Natural killer cell (primary cell): ENCODE measurements at regions of chr14 and their contacts with region 1.

Region 1: DNA sequence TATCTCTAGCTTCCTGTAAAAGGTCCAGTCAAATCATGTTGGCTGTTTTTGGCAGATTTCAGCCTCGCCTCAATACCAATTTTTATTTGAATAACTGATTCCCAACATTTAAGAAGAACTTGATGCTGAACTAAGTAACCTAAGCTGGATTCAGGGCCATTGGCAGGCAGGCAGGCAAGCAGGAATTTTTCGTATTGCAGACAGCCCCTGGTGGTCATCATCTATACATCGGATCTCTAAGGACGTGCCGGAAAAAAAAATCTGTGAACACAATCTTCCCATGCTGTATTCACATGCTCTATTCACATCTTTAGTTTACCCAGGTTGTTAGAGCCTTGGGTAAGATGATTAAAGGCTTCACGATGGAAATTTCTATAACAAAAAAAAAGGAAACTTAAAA is 7.0 kb downstream of the VCPKMT start:
- DNase-seq: no peak
- ATAC-seq: no peak
- H3K4me3 ChIP-seq: no peak overlapping the region
- H3K4me3 Mint-ChIP-seq: no peak overlapping the region
- H3K27ac ChIP-seq: no peak overlapping the region
- H3K27ac Mint-ChIP-seq: no peak overlapping the region
- H3K4me1 ChIP-seq: no peaks in the 10 kb centered on the region
- H3K4me1 Mint-ChIP-seq: no peaks in the 10 kb centered on the region
- H3K27me3 ChIP-seq: no peaks in the 10 kb centered on the region
- H3K27me3 Mint-ChIP-seq: no peaks in the 10 kb centered on the region
- CTCF ChIP-seq: no peak

Region 2: GRCh38 chr14:49852301-49853157 is 256.8 kb before region 1 on chr14 and contains the start of gene NEMF:
- intact Hi-C with region 1: loop called (anchors 1 kb)
- DNase-seq: peak; percentile 71 to 93
- ATAC-seq: peak; percentile 81 to 90 (median 82)
- H3K4me3 ChIP-seq: peak within 1 kb of the TSS; percentile 84
- H3K4me3 Mint-ChIP-seq: peak within 1 kb of the TSS; percentile 92
- H3K27ac ChIP-seq: peak within 1 kb of the TSS; percentile 86
- H3K27ac Mint-ChIP-seq: peak within 1 kb of the TSS; percentile 93 to 98
- H3K4me1 ChIP-seq: peaks cover 13% of the 10 kb centered on the region
- H3K4me1 Mint-ChIP-seq: peaks cover 38 to 45% of the 10 kb centered on the region in 2 donors
- H3K27me3 ChIP-seq: no peaks in the 10 kb centered on the region
- H3K27me3 Mint-ChIP-seq: no peaks in the 10 kb centered on the region
- CTCF ChIP-seq: peak; percentile 80
- total RNA-seq, gene NEMF: 120 to 126 (median 122) TPM

Region 3: DNA sequence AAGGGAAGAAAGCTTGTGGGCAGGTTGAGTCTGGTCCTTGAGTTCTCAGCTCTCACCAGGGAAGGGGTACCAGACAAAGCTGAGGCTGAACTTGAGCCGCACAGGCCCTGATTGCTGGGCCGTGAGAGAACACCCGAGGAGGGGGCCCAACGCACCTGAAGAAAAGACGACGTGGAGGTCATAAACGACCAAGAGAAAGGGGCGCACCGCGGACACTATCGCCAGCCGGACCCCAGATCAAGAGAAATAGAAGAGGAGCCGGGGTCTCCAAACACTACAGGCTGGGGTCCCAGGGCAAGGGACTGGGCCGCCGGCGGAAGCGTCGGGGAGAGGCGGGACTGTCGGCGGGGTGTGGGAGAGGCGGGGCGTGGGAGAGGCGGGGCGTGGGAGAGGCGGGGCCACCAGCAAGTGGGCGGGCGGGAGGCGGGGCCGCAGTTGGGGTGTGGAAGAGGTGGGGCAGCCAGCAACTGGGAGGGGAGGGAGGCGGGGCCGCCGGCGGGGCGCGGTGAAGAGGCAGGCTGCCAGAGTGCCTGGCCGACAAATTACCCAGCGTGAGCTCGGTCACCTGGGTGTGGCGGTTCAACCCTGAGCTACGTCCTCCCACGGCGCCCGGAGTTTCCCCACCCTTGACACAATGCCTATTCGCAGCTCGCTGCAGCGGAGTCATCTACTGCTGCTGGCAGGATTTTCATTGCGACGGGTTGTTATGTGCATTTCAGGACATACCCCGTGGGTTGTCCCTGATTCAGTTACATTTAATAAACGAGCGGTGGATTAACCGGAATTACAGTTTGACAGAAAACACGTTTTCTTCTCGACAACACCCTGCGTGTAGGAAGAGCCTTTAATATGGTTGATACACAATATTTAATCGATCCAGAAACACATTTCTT is 241.3 kb before region 1 on chr14:
- intact Hi-C with region 1: loop called (anchors 1 kb)
- DNase-seq: peak; percentile 94 to 98
- ATAC-seq: peak; percentile 86 to 97 (median 92)
- H3K4me3 ChIP-seq: peak overlapping the region; percentile 48
- H3K4me3 Mint-ChIP-seq: peak overlapping the region; percentile 92
- H3K27ac ChIP-seq: peak overlapping the region; percentile 93
- H3K27ac Mint-ChIP-seq: peak overlapping the region; percentile 94 to 100
- H3K4me1 ChIP-seq: peaks cover 33% of the 10 kb centered on the region
- H3K4me1 Mint-ChIP-seq: peaks cover 15 to 18% of the 10 kb centered on the region in 2 donors
- H3K27me3 ChIP-seq: no peaks in the 10 kb centered on the region
- H3K27me3 Mint-ChIP-seq: no peaks in the 10 kb centered on the region
- CTCF ChIP-seq: no peak

Region 4: DNA sequence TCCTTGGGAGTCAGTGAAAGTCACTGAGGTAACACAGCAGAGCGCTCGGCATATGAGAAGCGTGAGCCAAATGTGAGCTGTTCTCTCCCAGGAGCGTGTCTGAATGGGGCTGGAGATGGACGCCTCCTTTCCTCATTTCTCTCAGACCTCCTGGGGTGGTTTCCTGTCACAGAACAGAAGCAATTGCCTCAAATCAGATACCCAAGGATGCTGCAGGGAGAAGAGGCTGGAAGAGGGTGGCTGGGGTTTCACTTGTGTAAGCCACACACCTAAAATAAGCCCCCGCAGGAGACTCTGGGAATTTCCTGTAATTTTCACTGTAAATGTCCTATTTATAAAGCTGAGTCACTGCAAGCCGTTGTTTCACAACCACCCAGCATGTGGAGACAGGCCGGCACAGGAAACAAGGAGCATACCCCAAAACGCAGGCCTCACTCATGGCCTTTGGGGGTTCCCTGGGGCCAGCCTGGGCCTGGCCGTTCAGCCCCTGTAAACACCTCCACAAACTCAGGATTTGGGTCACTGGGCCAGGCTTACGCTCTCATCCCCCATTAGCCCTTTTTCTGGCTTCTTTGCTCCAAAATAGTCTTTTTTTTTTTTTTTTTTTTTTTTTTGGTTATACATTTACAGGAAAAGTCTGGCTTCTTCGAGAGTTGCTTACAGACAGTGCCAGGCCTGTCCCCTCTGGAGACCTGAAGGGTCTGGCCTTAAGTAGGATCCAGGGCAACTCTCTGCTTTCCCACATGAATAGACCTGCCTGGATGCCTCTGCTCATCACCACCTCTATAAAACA is 48.3 kb before region 1 on chr14:
- intact Hi-C with region 1: loop called (anchors 1 kb)
- DNase-seq: peak; percentile 56 to 72
- ATAC-seq: peak; percentile 31 to 46 (median 35)
- H3K4me3 ChIP-seq: no peak overlapping the region
- H3K4me3 Mint-ChIP-seq: peak overlapping the region; percentile 82
- H3K27ac ChIP-seq: peak overlapping the region; percentile 92
- H3K27ac Mint-ChIP-seq: peak overlapping the region; percentile 93 to 95
- H3K4me1 ChIP-seq: peaks cover 81% of the 10 kb centered on the region
- H3K4me1 Mint-ChIP-seq: peaks cover 76 to 83% of the 10 kb centered on the region in 2 donors
- H3K27me3 ChIP-seq: no peaks in the 10 kb centered on the region
- H3K27me3 Mint-ChIP-seq: no peaks in the 10 kb centered on the region
- CTCF ChIP-seq: no peak

Region 5: GRCh38 chr14:50085570-50086320 is 23.6 kb before region 1 on chr14:
- intact Hi-C with region 1: loop called (anchors 2 kb)
- DNase-seq: peak; percentile 36 to 70
- ATAC-seq: peak; percentile 53 to 66 (median 56)
- H3K4me3 ChIP-seq: no peak overlapping the region
- H3K4me3 Mint-ChIP-seq: peak overlapping the region; percentile 14
- H3K27ac ChIP-seq: peak overlapping the region; percentile 95
- H3K27ac Mint-ChIP-seq: peak overlapping the region; percentile 86 to 87
- H3K4me1 ChIP-seq: peaks cover 72% of the 10 kb centered on the region
- H3K4me1 Mint-ChIP-seq: peaks cover 62 to 66% of the 10 kb centered on the region in 2 donors
- H3K27me3 ChIP-seq: no peaks in the 10 kb centered on the region
- H3K27me3 Mint-ChIP-seq: no peaks in the 10 kb centered on the region
- CTCF ChIP-seq: no peak